ENCODE measurements at regions of chr9 and their contacts with region 1.

Region 1: DNA sequence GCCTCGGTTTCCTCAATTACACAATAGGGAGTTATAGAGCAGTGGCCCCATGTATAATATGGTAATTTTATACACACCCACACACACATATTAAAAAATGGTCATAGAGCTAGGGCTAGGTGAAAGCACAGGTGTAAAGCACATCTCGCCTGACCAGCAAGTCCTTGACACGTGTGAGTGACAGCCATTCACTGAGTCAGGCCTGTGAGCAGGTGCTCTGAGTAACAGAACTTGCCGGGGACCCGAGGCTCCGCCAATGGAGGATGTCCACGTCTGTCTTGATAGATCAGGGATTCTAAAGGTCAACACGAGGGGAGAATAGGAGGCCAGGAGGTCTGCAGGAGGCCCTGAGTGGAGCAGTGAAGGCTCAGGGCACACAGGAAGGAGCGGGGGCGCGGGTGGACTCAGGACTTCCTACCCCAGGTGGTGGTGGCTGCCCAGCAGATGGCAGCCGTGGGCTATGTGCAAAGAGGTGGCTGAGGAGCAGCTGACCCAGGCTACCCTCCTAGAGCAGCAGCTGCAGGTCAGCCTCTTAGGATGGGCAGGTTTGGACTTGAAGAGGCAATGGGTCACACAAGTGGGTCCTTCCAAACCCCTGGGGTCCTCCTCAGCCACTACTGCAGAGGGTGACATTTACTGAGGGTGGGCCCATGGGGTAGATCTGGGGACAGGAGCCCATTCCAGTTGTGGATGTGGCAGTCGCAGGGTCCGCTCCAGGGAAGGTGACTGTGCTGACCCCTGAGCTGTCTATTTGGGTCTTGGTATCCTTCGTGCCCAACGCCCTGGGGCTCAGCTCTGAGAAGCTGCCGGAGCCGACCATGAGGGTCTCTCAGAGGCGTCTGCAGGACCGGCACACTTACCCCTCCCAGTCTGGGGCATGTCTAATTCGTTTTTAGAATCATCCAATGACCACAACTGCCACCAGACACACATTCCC is 45.9 kb downstream of the PRRT1B start:
- DNase-seq: peak in 1 of 2 experiments; percentile 75
- H3K4me3 ChIP-seq: no peak overlapping the region
- H3K4me1 ChIP-seq: no peaks in the 10 kb centered on the region
- H3K27me3 ChIP-seq: no peaks in the 10 kb centered on the region

Region 2: GRCh38 chr9:131739980-131740648 is 148.9 kb after region 1 on chr9 and contains the start of gene RAPGEF1:
- in situ Hi-C with region 1: loop called (anchors 5 kb)
- DNase-seq: peak; percentile 10 to 82
- H3K4me3 ChIP-seq: peak within 1 kb of the TSS; percentile 52
- H3K4me1 ChIP-seq: no peaks in the 10 kb centered on the region
- H3K27me3 ChIP-seq: no peaks in the 10 kb centered on the region

Measured in HAP-1 (cell line).